Activated naive CD4-positive, alpha-beta T cell treated with anti-CD3 and anti-CD28 coated beads, Interleukin-2, amount 10 ng/mL, durations not matched to agents 7 days and 5 days (primary cell): ENCODE measurements at regions of chr2 and their contacts with region 1.

Region 1: DNA sequence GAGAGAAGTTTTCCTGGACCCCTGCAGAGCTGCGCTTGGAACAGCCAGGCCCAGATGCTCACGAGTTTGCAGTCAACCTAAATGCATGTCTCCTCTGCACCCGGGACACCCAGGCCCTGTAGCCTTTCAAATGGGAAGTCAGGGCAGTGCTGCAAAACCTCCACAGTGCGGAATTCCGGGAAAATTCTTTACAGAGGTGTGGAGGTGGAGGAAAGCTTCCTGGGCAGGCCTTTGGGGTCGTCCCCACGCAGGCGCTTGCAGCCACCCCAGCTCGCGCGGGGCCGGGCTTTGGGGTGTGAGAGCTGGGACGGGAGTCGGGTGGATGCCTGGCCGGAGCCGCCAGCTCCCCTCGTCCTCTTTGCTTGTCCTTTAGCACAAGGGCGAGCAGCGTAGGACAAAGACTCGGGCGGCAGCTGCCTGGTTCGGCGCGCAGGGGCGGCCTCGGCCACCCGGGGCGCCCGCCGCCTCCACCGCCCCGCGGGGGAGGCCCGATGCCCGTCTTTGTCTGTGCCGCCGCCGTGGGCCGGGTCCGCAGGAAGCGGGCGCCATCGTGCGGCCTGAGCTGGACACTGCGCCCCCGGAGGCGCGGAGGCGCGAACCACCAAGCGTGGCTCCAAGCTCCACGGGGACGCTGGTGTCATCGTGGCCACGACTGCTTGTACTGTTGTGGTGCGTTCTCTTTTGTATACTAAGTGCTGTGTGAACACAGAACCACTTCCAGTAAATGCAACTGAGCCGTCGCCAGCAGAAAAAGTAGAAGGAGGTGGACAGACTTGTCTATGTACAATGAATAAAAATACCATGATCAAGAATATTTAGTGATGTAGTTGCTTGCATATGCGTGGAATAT is 28.2 kb upstream of the BCL11A start:
- DNase-seq: peak; percentile 70
- H3K4me3 Mint-ChIP-seq: no peak overlapping the region
- H3K27ac Mint-ChIP-seq: no peak overlapping the region
- H3K4me1 Mint-ChIP-seq: peaks cover 3% of the 10 kb centered on the region
- H3K27me3 Mint-ChIP-seq: peaks cover 62% of the 10 kb centered on the region

Region 2: GRCh38 chr2:60560734-60561644 is 20.7 kb before region 1 on chr2:
- CTCF ChIA-PET with region 1: interaction called, 43 read pairs
- DNase-seq: no peak
- H3K4me3 Mint-ChIP-seq: no peak overlapping the region
- H3K27ac Mint-ChIP-seq: no peak overlapping the region
- H3K4me1 Mint-ChIP-seq: peaks cover 12% of the 10 kb centered on the region
- H3K27me3 Mint-ChIP-seq: peaks cover 67% of the 10 kb centered on the region

Region 3: GRCh38 chr2:60608679-60609078 is 27.0 kb after region 1 on chr2:
- CTCF ChIA-PET with region 1: no interaction called
- DNase-seq: no peak
- H3K4me3 Mint-ChIP-seq: no peak overlapping the region
- H3K27ac Mint-ChIP-seq: no peak overlapping the region
- H3K4me1 Mint-ChIP-seq: no peaks in the 10 kb centered on the region
- H3K27me3 Mint-ChIP-seq: peaks cover 19% of the 10 kb centered on the region

Region 4: GRCh38 chr2:60852282-60852860 is 270.7 kb after region 1 on chr2:
- CTCF ChIA-PET with region 1: no interaction called
- DNase-seq: no peak
- H3K4me3 Mint-ChIP-seq: no peak overlapping the region
- H3K27ac Mint-ChIP-seq: no peak overlapping the region
- H3K4me1 Mint-ChIP-seq: no peaks in the 10 kb centered on the region
- H3K27me3 Mint-ChIP-seq: peaks cover 15% of the 10 kb centered on the region